ENCODE measurements at regions of chr1 and their contacts with region 1.

Region 1: DNA sequence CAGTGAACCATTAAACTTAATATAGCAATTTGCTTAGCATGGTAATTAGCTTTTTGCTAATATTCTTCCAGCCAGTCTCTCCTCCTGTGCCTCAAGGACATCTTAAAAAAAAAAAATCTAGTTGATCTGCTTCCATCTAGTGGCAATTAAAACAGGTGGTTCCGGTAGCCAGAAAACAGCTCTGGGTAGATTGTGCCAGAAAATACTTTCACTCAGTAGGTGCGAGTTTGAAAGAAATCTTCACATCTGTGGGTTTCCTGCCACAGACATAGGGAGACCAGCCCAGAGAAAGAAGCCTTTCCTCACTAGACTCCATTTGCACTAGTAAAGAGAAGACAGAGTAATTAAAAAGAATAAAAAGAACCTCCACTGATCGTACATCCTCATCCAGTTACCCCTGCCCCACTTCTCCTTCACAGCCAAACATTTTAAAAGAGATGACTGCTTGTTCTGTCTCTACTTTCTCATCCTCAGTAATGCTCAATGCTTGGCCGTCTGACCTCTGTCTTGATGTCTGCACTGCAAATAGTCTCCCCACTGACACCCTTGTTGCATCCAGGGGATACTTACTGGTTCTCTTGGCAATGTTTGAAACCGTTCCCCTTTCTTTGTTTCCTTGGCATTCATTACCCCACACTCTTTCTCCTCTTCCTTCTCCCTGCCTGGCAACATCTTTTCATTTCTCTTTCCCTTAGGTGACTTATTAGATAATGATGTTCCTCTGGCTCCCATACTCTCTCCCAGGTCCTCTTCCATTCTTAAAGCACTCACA is 16.9 kb downstream of the SELL start:
- DNase-seq: no peak
- H3K4me3 ChIP-seq: no peak overlapping the region
- H3K27ac ChIP-seq: no peak overlapping the region
- H3K4me1 ChIP-seq: no peaks in the 10 kb centered on the region
- H3K27me3 ChIP-seq: no peaks in the 10 kb centered on the region
- CTCF ChIP-seq: no peak

Region 2: GRCh38 chr1:169466259-169467230 is 227.9 kb before region 1 on chr1:
- intact Hi-C with region 1: no loop called
- DNase-seq: peak in 2 of 5 donors; percentile 29 to 44
- H3K4me3 ChIP-seq: no peak overlapping the region
- H3K27ac ChIP-seq: no peak overlapping the region
- H3K4me1 ChIP-seq: no peaks in the 10 kb centered on the region
- H3K27me3 ChIP-seq: no peaks in the 10 kb centered on the region
- CTCF ChIP-seq: peak; percentile 19

Region 3: DNA sequence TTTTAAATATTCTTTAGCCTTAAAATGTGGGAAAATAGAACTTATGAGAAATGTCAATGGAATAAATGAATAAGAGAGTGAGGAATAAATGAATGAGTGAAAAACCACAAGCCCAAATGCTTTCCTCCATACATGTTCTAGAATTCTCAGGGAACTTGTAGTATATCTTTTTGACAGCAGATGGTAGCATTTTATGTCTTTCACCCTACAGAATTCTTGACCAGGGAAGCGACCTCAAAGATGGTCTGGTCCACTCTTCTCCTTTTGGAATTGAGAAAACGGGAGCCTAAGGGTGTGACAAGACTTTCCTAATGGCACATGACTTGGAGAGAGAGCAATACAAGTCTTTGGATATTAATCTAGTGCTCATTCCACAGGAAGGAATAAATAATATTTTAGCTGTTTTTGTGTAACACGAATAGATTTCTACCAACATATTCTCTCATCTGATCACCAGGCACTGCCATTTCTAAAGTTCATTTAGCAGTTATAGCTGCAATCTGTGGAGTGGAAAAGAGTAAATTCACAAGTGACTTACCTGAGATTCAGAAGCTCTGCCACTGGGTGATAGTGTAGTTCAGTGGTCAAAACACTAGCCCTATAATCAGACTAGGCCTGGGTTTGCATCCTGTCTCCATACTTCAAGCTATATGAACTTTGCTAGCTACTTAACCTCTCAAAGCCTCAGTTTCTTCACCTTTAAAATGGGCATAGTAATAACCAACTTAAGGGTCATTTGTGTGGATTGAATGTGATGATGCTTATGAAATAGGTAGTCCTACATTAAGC is 93.2 kb before region 1 on chr1:
- intact Hi-C with region 1: loop called (anchors 10 kb)
- DNase-seq: peak in 1 of 5 donors; percentile 29
- H3K4me3 ChIP-seq: no peak overlapping the region
- H3K27ac ChIP-seq: no peak overlapping the region
- H3K4me1 ChIP-seq: no peaks in the 10 kb centered on the region
- H3K27me3 ChIP-seq: no peaks in the 10 kb centered on the region
- CTCF ChIP-seq: peak; percentile 43

Region 4: DNA sequence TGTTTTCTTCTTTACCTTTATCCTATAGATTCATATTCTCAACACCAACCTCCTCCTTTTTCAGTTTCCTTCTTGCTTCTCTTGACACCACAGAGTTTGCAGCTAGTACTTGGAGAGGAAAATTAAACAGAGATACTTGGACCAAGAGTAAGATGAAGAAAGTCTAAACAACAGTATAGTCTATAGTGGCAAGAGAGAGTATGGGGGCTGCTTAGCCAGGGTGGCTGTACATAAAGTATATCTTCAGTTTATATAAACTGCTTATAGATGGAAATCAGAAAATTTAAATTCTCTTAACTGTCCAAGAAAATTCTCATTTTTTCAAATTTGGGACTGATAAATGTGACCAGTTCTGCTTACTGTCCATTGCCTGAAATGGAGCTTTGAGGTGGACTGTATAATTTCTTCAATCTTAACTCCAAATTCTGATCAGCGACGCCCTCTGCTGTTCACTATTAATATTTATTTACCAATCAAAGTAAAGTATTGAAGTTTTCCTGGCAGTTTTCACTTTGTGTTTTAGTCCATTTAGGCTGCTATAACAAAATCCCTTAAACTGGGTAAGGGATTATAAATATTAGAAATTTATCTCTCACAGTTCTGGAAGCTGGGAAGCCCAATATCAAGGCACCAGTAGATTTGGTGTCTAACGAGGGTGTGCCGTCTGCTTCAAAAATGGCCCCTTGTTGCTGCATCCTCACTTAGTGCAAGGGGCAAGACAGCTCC is 115.0 kb after region 1 on chr1:
- intact Hi-C with region 1: no loop called
- DNase-seq: peak in 2 of 5 donors; percentile 29 to 60
- H3K4me3 ChIP-seq: no peak overlapping the region
- H3K27ac ChIP-seq: no peak overlapping the region
- H3K4me1 ChIP-seq: no peaks in the 10 kb centered on the region
- H3K27me3 ChIP-seq: no peaks in the 10 kb centered on the region
- CTCF ChIP-seq: peak; percentile 52